Psoas muscle (tissue), 8 donors: ENCODE measurements at regions of chr6 and their contacts with region 1.

Region 1: GRCh38 chr6:28355743-28356665 is 6.3 kb downstream of the ZKSCAN3 start:
- DNase-seq: peak; percentile 59 to 72
- ATAC-seq: peak; percentile 82 to 97 (median 90)
- H3K4me3 ChIP-seq: peak overlapping the region; percentile 91
- H3K27ac ChIP-seq: peak overlapping the region; percentile 92
- H3K4me1 ChIP-seq: peaks cover 34% of the 10 kb centered on the region
- H3K27me3 ChIP-seq: no peaks in the 10 kb centered on the region
- CTCF ChIP-seq: peak; percentile 77

Region 2: GRCh38 chr6:27188885-27189418 is 1167.1 kb before region 1 on chr6:
- intact Hi-C with region 1: loop called in 1 of 2 experiments (anchors 5 kb)
- DNase-seq: peak; percentile 40 to 59
- ATAC-seq: peak; percentile 90 to 96 (median 94)
- H3K4me3 ChIP-seq: peak overlapping the region; percentile 86
- H3K27ac ChIP-seq: peak overlapping the region; percentile 71
- H3K4me1 ChIP-seq: peaks cover 4% of the 10 kb centered on the region
- H3K27me3 ChIP-seq: peaks cover 0 to 1% (median 0%) of the 10 kb centered on the region in 3 donors
- CTCF ChIP-seq: peak; percentile 76

Region 3: DNA sequence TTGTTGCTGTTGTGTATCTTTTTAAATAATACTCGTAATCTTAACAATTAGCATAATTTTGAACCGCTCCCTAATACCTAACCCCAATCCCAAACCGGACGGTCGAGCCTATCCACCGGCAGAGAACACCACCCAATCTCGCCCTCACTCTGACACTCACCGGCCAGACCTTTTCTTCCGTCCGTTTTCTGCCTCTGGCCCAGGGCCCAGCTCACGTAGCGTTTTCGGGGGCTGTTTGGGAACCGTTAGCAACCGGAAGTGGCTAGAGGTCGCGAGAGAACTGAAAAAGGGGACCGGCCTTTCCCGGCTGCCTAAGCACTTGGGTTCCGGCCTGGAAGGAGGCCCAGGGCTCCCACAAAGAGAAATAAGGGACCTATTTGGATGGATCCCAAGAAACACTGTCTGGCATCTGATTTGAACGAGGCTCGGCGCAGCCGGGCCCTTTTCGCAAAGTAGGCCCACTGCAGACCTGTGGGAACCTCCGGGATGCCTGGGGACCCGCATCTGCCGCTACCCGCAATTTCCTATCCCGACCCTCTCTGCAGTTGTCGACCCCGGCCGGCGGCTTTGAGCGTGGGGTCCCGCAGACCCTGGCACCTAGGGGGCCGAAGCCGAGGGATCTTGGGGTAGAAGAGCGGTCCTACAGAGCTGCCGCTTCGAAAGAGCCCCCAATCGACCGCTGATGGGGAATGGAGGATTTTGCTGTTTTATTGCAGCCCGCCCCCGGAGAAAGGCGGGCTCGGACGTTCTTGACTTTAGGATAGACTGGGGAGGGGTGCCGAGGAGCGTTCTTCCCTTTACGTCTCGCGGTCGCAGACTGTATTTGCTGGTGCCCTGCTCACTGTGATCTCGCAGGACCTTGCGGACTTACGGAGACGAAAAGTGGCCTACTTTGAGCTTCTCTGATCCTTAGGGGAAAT is 219.2 kb before region 1 on chr6:
- intact Hi-C with region 1: loop called (anchors 2 to 5 kb)
- DNase-seq: peak; percentile 91 to 96
- ATAC-seq: peak; percentile 92 to 94 (median 93)
- H3K4me3 ChIP-seq: peak overlapping the region; percentile 90
- H3K27ac ChIP-seq: peak overlapping the region; percentile 90
- H3K4me1 ChIP-seq: peaks cover 13% of the 10 kb centered on the region
- H3K27me3 ChIP-seq: no peaks in the 10 kb centered on the region
- CTCF ChIP-seq: no peak

Region 4: GRCh38 chr6:28225056-28225834 is 130.8 kb before region 1 on chr6 and contains the start of gene ZSCAN9:
- intact Hi-C with region 1: loop called in 1 of 2 experiments (anchors 10 kb)
- DNase-seq: peak; percentile 88 to 93
- ATAC-seq: peak; percentile 95 to 99 (median 98)
- H3K4me3 ChIP-seq: peak within 1 kb of the TSS; percentile 84
- H3K27ac ChIP-seq: peak within 1 kb of the TSS; percentile 62
- H3K4me1 ChIP-seq: peaks cover 10% of the 10 kb centered on the region
- H3K27me3 ChIP-seq: peaks cover 0 to 9% (median 1%) of the 10 kb centered on the region in 3 donors
- CTCF ChIP-seq: no peak
- total RNA-seq, gene ZSCAN9: 5.2 to 6.9 (median 6.3) TPM

Region 5: DNA sequence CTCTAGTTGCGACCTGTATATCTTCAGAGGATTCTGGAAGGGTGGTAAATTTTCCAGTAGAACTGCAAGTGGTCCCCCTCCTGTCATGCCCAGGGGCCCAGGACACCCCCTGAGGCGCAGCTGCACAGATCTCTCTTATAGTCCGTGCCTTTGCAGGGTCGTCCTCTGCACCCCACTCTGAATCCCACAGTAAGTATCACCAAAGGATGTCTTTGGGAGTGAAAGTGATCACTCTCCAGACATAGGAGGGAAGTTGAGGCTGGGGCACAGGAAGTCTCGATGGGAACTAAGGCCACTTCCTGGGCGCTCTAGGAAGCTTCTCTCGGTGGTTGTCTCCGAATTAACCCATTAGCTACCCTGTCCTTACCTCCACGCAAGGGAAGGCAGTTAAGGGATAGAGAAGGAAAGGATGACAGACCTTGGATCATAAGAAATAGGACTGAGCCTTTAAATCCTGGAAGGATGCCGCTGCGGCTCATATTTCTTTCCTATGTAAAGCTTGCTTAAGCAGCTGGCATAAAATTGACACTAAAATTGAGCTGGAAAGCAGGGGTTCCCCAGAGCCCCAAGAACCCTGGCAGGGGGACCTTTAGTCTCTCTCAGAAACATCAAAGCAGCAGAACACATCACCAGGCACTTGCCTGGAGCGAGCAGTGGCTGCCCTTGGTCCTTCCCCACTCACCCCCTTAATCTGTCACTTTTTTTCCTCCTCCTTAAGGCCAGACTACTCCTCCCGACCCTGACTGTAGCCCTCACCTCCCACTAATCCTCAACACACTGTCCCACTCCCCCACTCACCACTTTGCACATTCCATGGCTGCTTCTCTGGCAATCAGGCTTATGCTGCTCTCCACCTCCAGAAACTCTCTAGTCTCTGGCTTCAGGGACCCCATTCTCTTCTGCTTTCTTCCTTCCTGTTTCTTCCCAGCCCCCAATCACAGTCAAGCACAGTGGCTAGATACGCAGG is 103.7 kb before region 1 on chr6 and contains the start of gene ZKSCAN4:
- intact Hi-C with region 1: loop called in 1 of 2 experiments (anchors 5 kb)
- DNase-seq: peak; percentile 77 to 84
- ATAC-seq: peak; percentile 85 to 100 (median 98)
- H3K4me3 ChIP-seq: peak within 1 kb of the TSS; percentile 80
- H3K27ac ChIP-seq: peak within 1 kb of the TSS; percentile 61
- H3K4me1 ChIP-seq: peaks cover 7% of the 10 kb centered on the region
- H3K27me3 ChIP-seq: no peaks in the 10 kb centered on the region
- CTCF ChIP-seq: no peak
- total RNA-seq, gene ZKSCAN4: 1.0 to 2.2 (median 1.8) TPM

Region 6: GRCh38 chr6:28266962-28267694 is 88.9 kb before region 1 on chr6 and contains the start of gene ZSCAN26:
- intact Hi-C with region 1: loop called (anchors 5 kb)
- DNase-seq: peak; percentile 88 to 93
- ATAC-seq: peak; percentile 95 to 99 (median 97)
- H3K4me3 ChIP-seq: peak within 1 kb of the TSS; percentile 77
- H3K27ac ChIP-seq: peak within 1 kb of the TSS; percentile 78
- H3K4me1 ChIP-seq: peaks cover 27% of the 10 kb centered on the region
- H3K27me3 ChIP-seq: no peaks in the 10 kb centered on the region
- CTCF ChIP-seq: no peak
- total RNA-seq, gene ZSCAN26: 6.9 to 12.9 (median 10.1) TPM